Motor neuron (in vitro differentiated cells): ENCODE measurements at regions of chr6 and their contacts with region 1.

Region 1: GRCh38 chr6:130322673-130323268 is 43.0 kb upstream of the TMEM200A start:
- ATAC-seq: peak in 4 of 8 experiments; percentile 34 to 59 (median 41)
- H3K4me3 ChIP-seq: no peak overlapping the region
- H3K27ac ChIP-seq: no peak overlapping the region
- H3K4me1 ChIP-seq: no peaks in the 10 kb centered on the region

Region 2: GRCh38 chr6:130587778-130588520 is 265.2 kb after region 1 on chr6:
- in situ Hi-C with region 1: no loop called
- ATAC-seq: no peak
- H3K4me3 ChIP-seq: no peak overlapping the region
- H3K27ac ChIP-seq: no peak overlapping the region
- H3K4me1 ChIP-seq: no peaks in the 10 kb centered on the region

Region 3: DNA sequence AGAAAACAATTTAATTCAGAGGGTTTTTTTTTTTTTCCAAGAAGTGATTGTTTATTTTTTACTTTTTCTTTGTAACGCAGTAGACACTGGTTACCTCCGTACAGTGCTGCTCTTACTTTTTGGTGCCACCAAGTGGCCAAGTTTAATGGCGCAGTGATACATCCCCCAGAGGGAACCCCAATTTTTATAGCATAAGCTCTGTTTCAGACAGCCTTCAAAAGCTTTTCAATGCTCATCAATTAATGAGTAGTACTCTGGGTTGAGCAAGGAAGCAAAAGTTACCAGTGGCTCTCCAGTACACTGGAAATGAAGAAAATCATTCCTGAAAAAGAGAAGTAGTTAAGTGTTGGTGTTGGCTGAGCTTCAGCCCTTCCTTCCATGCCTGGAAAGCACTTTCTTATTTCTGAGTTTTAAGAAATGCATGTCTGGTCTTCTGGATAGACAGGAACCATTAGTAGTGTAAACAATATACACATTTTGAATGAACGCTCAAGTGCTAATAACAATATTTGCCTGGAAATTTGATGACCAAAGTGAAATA is 375.3 kb after region 1 on chr6:
- in situ Hi-C with region 1: loop called in 1 of 9 experiments (anchors 10 kb)
- ATAC-seq: peak; percentile 91 to 99 (median 96)
- H3K4me3 ChIP-seq: no peak overlapping the region
- H3K27ac ChIP-seq: no peak overlapping the region
- H3K4me1 ChIP-seq: peaks cover 6 to 17% of the 10 kb centered on the region in 2 donors

Region 4: DNA sequence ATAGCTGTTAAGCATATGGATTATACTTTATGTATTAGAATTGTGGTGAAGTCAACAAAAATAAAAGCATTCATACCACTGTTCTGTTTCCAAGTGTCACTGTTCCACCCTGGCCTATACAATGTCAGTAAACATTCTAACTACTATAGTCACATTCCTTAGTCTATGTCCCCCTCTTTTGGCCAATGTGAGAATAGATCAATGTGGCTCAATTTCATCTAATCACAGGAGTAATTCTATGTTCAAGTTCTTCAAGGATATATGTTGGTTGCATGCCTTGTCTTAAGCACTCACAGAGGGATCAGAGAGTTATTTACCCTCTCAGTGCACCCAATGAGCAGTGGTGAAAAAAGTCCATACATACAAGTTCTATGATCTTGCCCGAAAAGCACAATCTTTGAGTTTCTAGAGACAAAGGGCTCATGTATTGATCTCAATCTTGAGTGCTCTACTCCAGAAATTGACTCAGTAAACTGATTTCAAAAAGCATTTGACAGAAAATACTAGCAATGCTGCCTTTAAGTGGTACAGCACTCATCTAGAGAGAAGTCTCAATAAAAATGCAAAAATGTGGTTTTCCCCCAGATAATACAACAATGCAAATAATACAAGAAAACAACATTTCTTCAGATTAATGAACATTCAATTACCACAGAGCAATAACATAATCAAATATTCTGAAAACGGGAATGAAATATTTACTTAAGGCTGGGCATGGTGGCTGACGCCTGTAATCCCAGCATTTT is 521.0 kb after region 1 on chr6:
- in situ Hi-C with region 1: loop called in 3 of 9 experiments (anchors 10 to 25 kb)
- ATAC-seq: peak; percentile 35 to 92 (median 80)
- H3K4me3 ChIP-seq: no peak overlapping the region
- H3K27ac ChIP-seq: no peak overlapping the region
- H3K4me1 ChIP-seq: no peaks in the 10 kb centered on the region